Right ventricle myocardium inferior (tissue), 1 donor: ENCODE measurements at regions of chr6 and their contacts with region 1.

Region 1: DNA sequence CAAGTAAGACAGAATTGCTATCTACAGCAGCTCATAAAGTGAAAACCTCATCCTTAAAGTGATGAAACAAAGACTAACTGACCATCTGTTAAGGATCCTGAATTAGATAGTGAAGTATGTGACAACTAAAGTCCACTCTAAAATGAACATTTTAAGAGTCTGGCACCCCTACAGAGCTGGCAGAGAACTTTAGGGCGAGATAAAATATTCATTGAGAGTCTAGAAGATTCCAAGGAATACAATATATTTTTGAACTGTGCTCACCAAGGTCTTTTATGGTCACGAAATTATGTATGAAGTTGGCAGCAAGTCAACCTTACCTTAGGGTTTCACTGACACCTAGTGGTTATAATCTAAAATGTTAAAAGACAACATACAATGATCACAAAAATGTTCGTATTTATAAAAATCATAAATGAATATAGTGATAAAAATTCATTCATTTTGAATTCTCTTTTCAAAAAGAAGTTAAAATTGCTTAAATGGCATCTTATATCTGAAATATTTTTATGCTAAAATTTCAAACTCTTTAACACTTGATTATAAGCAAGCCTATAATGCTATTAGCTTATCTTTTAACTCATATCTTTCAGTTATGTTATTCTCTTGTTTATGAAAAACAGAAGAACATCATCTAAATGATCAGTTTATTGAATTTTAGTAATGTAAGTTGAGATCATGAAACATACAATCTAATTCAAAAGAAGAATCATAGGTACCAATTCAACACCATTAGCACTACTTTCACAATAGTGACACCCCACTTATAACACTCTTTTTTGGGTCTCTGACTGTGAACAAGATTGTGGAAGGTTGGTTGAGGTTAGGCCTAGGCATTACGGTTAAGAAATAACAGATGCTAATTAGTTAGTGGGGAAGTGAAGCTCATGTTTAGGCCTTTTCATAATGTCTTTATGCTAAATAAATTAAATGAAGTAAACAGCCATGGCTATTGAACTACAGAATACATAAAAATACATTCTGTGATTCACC is 27.5 kb downstream of the RSPH3 start:
- DNase-seq: no peak
- ATAC-seq: peak; percentile 44

Region 2: GRCh38 chr6:158220786-158221442 is 751.6 kb before region 1 on chr6:
- intact Hi-C with region 1: loop called (anchors 10 kb)
- DNase-seq: peak; percentile 94
- ATAC-seq: peak; percentile 91

Region 3: GRCh38 chr6:158704181-158704822 is 268.2 kb before region 1 on chr6:
- intact Hi-C with region 1: loop called (anchors 1 kb)
- DNase-seq: peak; percentile 91
- ATAC-seq: peak; percentile 89

Region 4: DNA sequence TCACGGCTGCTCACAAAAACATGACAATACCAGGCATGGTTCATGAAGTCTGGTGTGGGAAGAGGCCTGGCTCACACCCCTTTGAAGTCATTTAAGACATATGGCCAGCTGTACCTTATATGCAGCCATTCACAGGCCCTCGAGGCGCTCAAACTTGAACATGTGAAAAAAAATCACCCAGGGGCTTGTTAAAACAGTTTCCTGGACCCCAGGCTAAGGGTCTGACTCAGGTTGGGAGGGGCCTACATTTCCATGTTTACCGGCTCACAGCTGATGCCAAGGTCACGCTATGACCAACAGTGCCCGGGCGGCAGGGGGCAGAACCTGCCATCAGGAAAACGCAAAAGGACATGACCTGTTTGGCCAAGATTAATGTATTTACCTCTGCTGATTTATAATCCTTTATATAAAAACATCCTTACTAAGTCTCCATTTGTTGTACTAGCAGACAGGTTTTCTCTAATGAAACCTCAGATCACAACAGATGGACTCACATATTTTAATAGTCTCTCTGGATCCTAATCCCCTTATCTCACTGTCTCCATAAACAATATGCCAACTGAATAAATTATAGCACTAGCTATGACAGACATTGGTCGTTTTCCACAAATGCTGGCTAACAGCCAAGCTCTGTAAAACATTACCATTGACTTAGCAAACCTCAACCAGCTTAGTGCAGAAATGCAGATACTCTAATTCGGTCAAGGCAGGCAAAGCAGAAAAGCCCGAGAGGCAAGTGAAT is 173.3 kb before region 1 on chr6:
- intact Hi-C with region 1: loop called (anchors 5 kb)
- DNase-seq: no peak
- ATAC-seq: peak; percentile 18

Region 5: DNA sequence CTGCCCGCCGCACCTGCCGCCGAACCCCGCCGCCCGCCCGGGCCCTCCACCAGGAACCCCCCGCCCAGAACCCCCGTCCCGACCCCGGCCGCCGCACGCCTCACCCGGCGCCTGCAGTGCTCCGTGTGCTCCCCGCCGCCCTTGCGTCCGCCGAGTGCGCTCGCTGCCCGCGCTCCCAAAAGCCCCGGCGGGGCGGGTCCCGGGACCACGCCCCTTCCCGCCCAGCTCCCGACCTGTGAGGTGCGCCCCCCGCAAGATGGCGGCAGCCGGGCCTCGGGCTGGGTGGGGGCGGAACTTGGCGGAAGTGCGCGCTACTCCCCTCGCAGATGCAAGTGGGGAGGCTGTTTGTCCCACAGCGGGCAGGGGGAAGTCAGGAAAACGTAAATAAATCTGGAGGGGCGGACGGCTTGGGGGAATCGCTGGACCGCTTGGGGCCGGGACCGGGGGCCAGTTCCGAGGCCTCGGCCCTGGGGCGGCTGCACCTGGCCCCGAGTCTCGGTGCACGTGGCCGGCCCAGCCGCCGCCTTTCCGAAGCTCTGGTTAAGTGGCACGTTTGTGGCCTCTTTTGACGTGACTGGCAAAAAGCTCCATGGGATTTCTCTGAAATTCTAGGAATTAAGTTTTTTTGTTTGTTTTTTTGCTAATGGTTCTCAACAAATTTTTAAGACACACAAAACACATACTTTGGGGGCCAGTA is 153.2 kb before region 1 on chr6 and contains the start of gene EZR:
- intact Hi-C with region 1: loop called (anchors 5 kb)
- DNase-seq: peak; percentile 87
- ATAC-seq: peak; percentile 81
- total RNA-seq, gene EZR: 203 TPM